Thyroid gland (tissue), 4 donors: ENCODE measurements at regions of chr4 and their contacts with region 1.

Region 1: GRCh38 chr4:75028196-75028854 is 95.4 kb downstream of the PARM1 start:
- DNase-seq: peak; percentile 83 to 86
- H3K4me3 ChIP-seq: no peak overlapping the region
- H3K27ac ChIP-seq: peak overlapping the region; percentile 88 to 93 (median 88)
- H3K4me1 ChIP-seq: peaks cover 49 to 60% of the 10 kb centered on the region in 2 donors
- H3K27me3 ChIP-seq: no peaks in the 10 kb centered on the region
- CTCF ChIP-seq: peak in 1 of 6 experiments; percentile 11
- POLR2A ChIP-seq: peak in 1 of 2 donors; percentile 53

Region 2: DNA sequence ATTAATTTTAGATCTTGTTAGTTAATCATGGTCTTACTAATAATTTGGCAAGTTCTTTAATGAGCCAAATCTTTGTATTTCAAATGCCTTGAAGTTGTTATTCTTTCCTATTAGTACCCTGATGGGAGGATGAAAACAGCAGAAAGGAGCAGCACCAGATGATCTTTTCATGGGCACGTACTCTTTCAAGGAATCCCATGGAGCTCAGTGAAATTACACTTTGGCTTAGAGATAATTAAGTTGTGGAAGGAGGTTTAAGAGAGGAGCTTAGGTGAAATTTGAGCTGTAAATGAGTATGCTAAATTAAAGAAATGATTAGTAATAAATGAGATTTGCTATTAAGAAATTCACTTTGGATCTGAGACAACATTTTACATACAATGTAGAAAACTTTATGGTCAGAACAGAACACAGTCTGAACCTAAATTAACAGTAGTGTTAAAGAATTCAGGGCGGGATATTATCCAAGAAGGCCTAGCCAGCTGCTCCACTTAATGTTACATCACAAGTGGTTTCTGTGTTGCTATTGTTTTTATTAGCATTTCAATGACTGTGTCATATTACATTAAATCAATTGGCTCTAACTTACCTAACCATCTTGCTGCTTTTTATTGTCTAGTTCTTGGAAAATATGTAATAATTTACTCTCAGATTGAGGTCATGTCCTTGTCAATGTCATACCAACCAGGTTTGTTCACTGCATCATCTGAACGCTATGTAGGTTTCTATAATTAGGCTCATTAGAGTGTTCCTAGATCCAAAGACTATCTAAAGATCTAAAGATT is 866.5 kb before region 1 on chr4:
- intact Hi-C with region 1: no loop called
- DNase-seq: no peak
- H3K4me3 ChIP-seq: no peak overlapping the region
- H3K27ac ChIP-seq: peak overlapping the region in 1 of 3 donors; percentile 2
- H3K4me1 ChIP-seq: peaks cover 4 to 17% of the 10 kb centered on the region in 2 donors
- H3K27me3 ChIP-seq: no peaks in the 10 kb centered on the region
- CTCF ChIP-seq: no peak
- POLR2A ChIP-seq: no peak

Region 3: DNA sequence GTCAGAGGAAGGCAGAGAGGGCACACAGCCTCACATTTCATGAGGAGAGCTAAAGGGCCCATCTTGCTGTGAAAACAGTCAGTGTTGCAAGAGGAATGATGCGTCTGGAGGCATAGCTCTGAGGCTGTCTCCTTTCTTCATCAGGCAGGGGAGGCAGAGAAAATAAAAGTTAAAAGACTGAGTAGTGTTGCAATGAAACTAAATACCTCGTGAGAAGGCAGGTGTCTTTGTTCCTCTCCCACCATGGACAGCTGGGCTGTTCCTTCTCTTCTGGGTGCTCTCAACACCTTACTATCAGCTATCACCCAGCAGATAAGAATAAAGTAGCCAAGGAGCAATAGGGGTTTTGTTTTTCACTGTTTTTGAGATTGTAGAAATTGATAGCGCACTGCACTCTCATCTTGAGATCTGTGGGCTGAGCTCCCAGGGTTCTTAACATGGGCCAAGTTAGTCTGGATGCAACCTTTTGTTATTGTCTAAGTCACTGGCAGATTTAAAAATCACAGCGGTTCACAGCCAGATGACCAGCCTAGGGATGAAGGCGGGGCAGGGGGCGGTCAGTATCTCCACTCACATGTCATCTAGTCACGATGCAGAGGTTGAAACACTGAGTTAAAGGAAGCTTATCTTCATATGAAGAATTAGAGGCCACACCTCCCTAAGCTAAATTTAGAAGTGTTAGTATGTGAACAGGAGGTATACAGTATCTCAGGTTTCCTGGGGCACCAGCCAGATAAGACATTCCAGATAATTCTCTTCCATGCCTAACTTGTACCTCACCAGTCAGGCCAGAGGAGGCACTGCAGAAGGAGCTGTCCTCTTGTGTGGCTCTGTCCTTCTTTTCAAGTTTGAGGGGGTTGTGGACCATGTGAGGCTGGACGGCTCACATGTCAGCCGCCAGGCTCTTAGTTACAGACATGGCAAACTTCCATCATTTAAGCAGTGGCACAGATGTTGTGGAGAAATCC is 58.5 kb before region 1 on chr4:
- intact Hi-C with region 1: loop called (anchors 5 kb)
- DNase-seq: peak; percentile 42 to 60
- H3K4me3 ChIP-seq: no peak overlapping the region
- H3K27ac ChIP-seq: peak overlapping the region; percentile 43 to 95 (median 83)
- H3K4me1 ChIP-seq: peaks cover 72 to 78% of the 10 kb centered on the region in 2 donors
- H3K27me3 ChIP-seq: no peaks in the 10 kb centered on the region
- CTCF ChIP-seq: peak in 4 of 6 experiments; percentile 39 to 50 (median 43)
- POLR2A ChIP-seq: peak in 1 of 2 donors; percentile 24